IMR-90 (cell line): ENCODE measurements at regions of chr13 and their contacts with region 1.

Region 1: GRCh38 chr13:19782049-19782726 is 557 bp downstream of the PSPC1 start:
- DNase-seq: peak; percentile 45
- ATAC-seq: peak; percentile 68
- H3K4me3 ChIP-seq: peak overlapping the region; percentile 80
- H3K27ac ChIP-seq: peak overlapping the region; percentile 91
- H3K4me1 ChIP-seq: no peaks in the 10 kb centered on the region
- H3K27me3 ChIP-seq: no peaks in the 10 kb centered on the region
- CTCF ChIP-seq: no peak
- POLR2A ChIP-seq: no peak
- RAD21 ChIP-seq: no peak

Region 2: GRCh38 chr13:19863323-19864023 is 81.3 kb after region 1 on chr13 and contains the start of gene ZMYM5:
- CTCF ChIA-PET with region 1: no interaction called
- POLR2A ChIA-PET with region 1: no interaction called
- dilution Hi-C with region 1: no loop called
- in situ Hi-C with region 1: no loop called
- intact Hi-C with region 1: loop called (anchors 5 kb)
- DNase-seq: peak; percentile 99
- ATAC-seq: peak; percentile 96
- H3K4me3 ChIP-seq: peak within 1 kb of the TSS; percentile 98
- H3K27ac ChIP-seq: peak within 1 kb of the TSS; percentile 84
- H3K4me1 ChIP-seq: peaks cover 5% of the 10 kb centered on the region; the same call in 1 of the 2 replicates
- H3K27me3 ChIP-seq: no peaks in the 10 kb centered on the region
- CTCF ChIP-seq: no peak
- POLR2A ChIP-seq: peak; percentile 79
- RAD21 ChIP-seq: no peak
- total RNA-seq, gene ZMYM5: 10.2 and 13.6 TPM in 2 replicates

Region 3: DNA sequence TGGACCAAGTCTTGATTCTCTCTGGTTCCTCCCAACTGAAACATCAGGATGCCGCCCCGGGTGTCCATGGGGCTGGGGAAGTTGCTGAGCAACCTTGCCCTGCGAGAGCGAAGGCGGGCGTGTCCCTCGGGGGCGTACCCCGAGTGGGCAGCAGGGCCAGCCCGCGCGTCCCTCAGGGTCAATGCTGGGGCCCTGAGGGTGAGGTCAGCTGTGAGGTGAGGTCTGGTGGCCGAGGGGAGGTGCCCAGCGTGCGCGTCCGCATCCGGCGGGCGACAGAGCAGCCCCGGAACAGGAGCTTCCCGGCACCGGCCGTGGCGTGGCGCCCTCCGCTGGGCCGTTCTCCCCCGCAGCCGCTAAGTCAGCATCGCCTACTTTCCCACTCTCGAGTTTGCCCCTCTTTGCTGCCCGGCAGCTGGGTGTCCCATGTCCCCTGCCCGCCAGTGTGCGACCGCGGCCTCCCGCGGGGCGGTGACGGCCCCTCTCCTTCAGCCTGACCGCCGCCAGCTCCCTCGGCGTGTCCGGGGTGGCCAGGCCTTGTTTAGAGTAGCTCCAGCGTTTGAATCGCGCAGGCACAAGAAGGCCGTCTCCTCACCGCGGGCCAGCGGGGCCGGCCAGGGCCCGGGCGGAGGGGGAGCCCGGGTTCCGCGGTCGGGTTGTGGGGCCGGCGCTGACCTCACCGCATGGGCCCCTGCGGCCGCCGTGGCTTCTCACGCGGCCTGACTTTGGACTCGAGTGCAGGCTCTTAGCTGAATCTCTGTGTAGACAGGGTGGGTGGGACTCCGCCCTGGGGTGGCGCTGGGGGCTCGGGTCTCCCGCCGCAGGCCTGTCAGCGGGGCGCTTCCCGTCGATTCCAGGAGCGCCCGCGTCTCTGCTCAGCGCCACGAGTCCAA is 345.6 kb after region 1 on chr13:
- CTCF ChIA-PET with region 1: no interaction called
- POLR2A ChIA-PET with region 1: no interaction called
- dilution Hi-C with region 1: no loop called
- in situ Hi-C with region 1: no loop called
- intact Hi-C with region 1: no loop called
- DNase-seq: peak; percentile 16
- ATAC-seq: peak; percentile 47
- H3K4me3 ChIP-seq: peak overlapping the region; percentile 11; the same call in 1 of the 2 replicates
- H3K27ac ChIP-seq: no peak overlapping the region; the same call in 1 of the 2 replicates
- H3K4me1 ChIP-seq: peaks cover 7% of the 10 kb centered on the region
- H3K27me3 ChIP-seq: peaks cover 7% of the 10 kb centered on the region; the same call in 1 of the 2 replicates
- CTCF ChIP-seq: 0 out of 2 replicates have a peak, but pooled peaks have one; percentile 15
- POLR2A ChIP-seq: no peak
- RAD21 ChIP-seq: no peak